ENCODE measurements at regions of chr17 and their contacts with region 1.

Region 1: GRCh38 chr17:28710861-28711722 is 596 bp downstream of the PROCA1 start:
- DNase-seq: peak; percentile 85 to 88 (median 87)
- H3K4me3 ChIP-seq: peak overlapping the region; percentile 63 to 69
- H3K4me3 Mint-ChIP-seq: peak overlapping the region; percentile 91 to 95 (median 94)
- H3K27ac ChIP-seq: peak overlapping the region; percentile 85
- H3K27ac Mint-ChIP-seq: peak overlapping the region; percentile 92 to 97 (median 96)
- H3K4me1 ChIP-seq: peaks cover 13% of the 10 kb centered on the region
- H3K4me1 Mint-ChIP-seq: peaks cover 13 to 30% (median 20%) of the 10 kb centered on the region in 4 donors
- H3K27me3 ChIP-seq: peaks cover 7% of the 10 kb centered on the region
- H3K27me3 Mint-ChIP-seq: peaks cover 4 to 11% of the 10 kb centered on the region in 2 donors

Region 2: GRCh38 chr17:28571255-28572122 is 139.6 kb before region 1 on chr17 and contains the start of gene PIGS:
- CTCF ChIA-PET with region 1: no interaction called
- POLR2A ChIA-PET with region 1: interaction called, 12 read pairs
- intact Hi-C with region 1: no loop called
- DNase-seq: peak; percentile 84 to 93 (median 87)
- H3K4me3 ChIP-seq: peak within 1 kb of the TSS; percentile 59 to 93
- H3K4me3 Mint-ChIP-seq: peak within 1 kb of the TSS; percentile 96 to 99 (median 97)
- H3K27ac ChIP-seq: peak within 1 kb of the TSS; percentile 79
- H3K27ac Mint-ChIP-seq: peak within 1 kb of the TSS; percentile 80 to 98 (median 97)
- H3K4me1 ChIP-seq: peaks cover 68% of the 10 kb centered on the region
- H3K4me1 Mint-ChIP-seq: peaks cover 41 to 82% (median 57%) of the 10 kb centered on the region in 4 donors
- H3K27me3 ChIP-seq: no peaks in the 10 kb centered on the region
- H3K27me3 Mint-ChIP-seq: no peaks in the 10 kb centered on the region
- total RNA-seq, gene PIGS: 57.9 to 58.2 TPM

Region 3: DNA sequence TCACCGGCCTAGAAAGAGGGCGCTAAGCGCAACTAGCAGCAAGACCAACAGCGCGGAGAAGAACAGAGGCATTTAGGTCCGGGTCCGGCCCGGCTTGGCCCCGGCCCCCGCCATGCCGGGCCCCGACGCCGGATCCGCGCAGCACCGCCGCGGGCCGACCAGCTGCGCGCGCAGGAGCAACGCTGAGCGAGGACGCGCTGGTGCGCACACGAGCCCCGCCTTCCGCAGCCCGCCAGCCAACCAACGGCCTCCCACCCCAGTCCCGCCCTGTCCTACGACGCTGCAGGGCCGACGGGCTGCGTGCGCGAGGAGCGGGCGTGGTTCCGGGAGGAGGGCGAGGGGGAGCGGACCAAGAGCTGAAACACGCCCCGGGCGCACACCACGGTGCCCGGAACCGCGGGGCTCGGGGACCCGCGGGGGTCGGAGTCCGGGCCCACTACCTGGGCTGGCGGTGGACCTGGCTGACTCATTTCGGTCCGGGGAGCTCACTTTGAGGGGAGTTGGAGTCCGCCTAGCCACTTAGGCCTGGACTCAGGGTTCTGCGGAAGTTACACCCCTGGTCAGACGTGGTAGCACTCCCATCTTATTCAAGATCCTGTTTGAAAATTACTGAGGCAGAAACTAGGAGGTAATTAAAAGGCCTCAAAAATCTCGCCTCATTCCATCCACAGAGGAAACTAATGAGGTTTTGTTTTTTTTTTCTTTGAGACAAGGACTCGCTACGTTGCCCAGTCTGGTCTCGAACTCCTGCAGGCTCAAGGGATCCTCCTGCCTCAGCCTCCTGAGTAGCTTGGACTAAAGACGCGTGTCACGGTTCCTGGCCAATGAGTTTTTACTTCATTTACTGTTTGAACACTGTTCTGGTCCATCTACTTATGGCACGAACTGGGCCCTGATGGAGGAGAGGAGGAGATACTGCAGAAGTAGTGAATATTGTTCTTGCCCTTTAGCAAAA is 65.8 kb before region 1 on chr17 and contains the start of gene BLTP2:
- CTCF ChIA-PET with region 1: interaction called, 8 read pairs
- POLR2A ChIA-PET with region 1: interaction called, 11 read pairs
- intact Hi-C with region 1: no loop called
- DNase-seq: peak; percentile 93 to 95 (median 94)
- H3K4me3 ChIP-seq: peak within 1 kb of the TSS; percentile 45 to 98
- H3K4me3 Mint-ChIP-seq: peak within 1 kb of the TSS; percentile 86 to 96 (median 92)
- H3K27ac ChIP-seq: peak within 1 kb of the TSS; percentile 91
- H3K27ac Mint-ChIP-seq: peak within 1 kb of the TSS; percentile 93 to 99 (median 98)
- H3K4me1 ChIP-seq: peaks cover 47% of the 10 kb centered on the region
- H3K4me1 Mint-ChIP-seq: peaks cover 31 to 45% (median 37%) of the 10 kb centered on the region in 4 donors
- H3K27me3 ChIP-seq: no peaks in the 10 kb centered on the region
- H3K27me3 Mint-ChIP-seq: no peaks in the 10 kb centered on the region
- total RNA-seq, gene BLTP2: 132 to 149 TPM

Region 4: DNA sequence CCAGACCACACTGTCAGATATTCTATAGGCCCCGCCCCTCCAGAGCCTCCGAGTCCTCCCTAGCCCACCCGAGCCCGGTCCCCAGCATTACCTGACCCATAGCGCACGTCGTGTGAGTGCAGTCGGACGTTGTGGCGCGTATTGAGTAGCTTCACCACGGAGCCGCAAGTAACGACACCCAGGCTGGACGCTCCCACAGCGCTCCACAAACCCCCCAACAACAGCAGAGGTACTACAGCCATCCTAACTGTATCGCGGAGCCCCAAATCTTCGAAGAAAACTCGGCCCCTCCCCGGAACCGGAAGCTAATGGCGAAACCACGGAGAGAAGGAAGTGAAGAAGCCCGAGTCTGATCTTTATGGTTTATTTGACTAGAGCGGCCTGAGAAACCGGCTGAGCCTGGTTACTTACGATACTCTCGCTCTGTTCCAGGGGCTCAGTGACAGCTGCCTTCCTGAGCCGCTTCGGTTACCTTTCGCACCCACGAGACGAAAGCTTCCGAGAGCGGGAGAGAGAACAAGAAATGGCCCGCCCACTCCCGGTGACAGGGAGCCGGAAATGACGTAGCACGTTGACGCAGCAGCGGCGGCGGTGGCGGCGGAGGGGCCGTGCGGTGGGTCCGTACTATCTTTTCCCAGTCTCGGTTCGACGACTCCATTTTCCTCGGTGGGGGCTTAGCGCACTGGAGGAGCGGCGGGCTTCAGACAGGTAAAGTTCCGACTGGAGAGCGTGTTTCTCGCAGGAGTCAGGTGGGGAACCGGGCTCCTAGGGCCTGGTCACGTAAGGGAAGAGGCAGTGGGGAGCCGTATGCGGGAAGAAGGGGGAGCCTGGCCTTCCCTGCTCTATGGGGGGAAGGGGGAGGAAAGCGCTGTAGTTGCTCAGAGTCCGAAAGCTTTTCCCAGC is 49.2 kb before region 1 on chr17 and contains the starts of genes SDF2 and SUPT6H:
- CTCF ChIA-PET with region 1: no interaction called
- POLR2A ChIA-PET with region 1: interaction called, 20 read pairs
- intact Hi-C with region 1: loop called (anchors 2 kb)
- DNase-seq: peak; percentile 94 to 96 (median 95)
- H3K4me3 ChIP-seq: peak within 1 kb of the TSS; percentile 92 to 99
- H3K4me3 Mint-ChIP-seq: peak within 1 kb of the TSS; percentile 99 to 100 (median 100)
- H3K27ac ChIP-seq: peak within 1 kb of the TSS; percentile 99
- H3K27ac Mint-ChIP-seq: peak within 1 kb of the TSS; percentile 97 to 100 (median 100)
- H3K4me1 ChIP-seq: peaks cover 51% of the 10 kb centered on the region
- H3K4me1 Mint-ChIP-seq: peaks cover 42 to 68% (median 56%) of the 10 kb centered on the region in 4 donors
- H3K27me3 ChIP-seq: no peaks in the 10 kb centered on the region
- H3K27me3 Mint-ChIP-seq: no peaks in the 10 kb centered on the region
- total RNA-seq, gene SDF2: 41.5 to 48.1 TPM
- total RNA-seq, gene SUPT6H: 96.5 to 102 TPM

Region 5: DNA sequence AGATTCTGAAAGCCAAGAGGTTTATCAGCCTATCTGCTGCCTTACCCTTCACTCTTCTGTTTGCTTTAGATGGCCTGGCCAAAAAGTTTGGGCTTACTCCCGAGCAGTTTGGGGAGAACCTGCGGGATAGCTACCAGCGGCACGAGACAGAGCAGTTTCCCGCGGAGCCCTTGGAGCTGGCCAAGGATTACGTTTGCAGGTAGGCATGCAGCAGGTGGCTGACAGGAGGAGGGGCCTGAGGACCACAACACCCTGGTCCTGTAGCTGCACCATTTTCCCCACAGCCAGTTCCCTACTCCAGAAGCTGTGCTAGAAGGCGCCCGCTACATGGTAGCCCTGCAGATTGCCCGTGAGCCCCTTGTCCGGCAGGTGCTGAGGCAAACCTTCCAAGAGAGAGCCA is 28.4 kb before region 1 on chr17:
- CTCF ChIA-PET with region 1: no interaction called
- POLR2A ChIA-PET with region 1: no interaction called
- intact Hi-C with region 1: no loop called
- DNase-seq: no peak
- H3K4me3 ChIP-seq: no peak overlapping the region
- H3K4me3 Mint-ChIP-seq: no peak overlapping the region
- H3K27ac ChIP-seq: no peak overlapping the region
- H3K27ac Mint-ChIP-seq: no peak overlapping the region
- H3K4me1 ChIP-seq: no peaks in the 10 kb centered on the region
- H3K4me1 Mint-ChIP-seq: peaks cover 0 to 6% (median 0%) of the 10 kb centered on the region in 4 donors
- H3K27me3 ChIP-seq: no peaks in the 10 kb centered on the region
- H3K27me3 Mint-ChIP-seq: no peaks in the 10 kb centered on the region

Region 6: GRCh38 chr17:28743225-28744103 is 32.4 kb after region 1 on chr17 and contains the start of gene TRAF4:
- CTCF ChIA-PET with region 1: no interaction called
- POLR2A ChIA-PET with region 1: interaction called, 10 read pairs
- intact Hi-C with region 1: no loop called
- DNase-seq: peak; percentile 70 to 78 (median 75)
- H3K4me3 ChIP-seq: peak within 1 kb of the TSS; percentile 64 to 81
- H3K4me3 Mint-ChIP-seq: peak within 1 kb of the TSS; percentile 87 to 92 (median 90)
- H3K27ac ChIP-seq: peak within 1 kb of the TSS; percentile 67
- H3K27ac Mint-ChIP-seq: peak within 1 kb of the TSS; percentile 90 to 98 (median 96)
- H3K4me1 ChIP-seq: peaks cover 35% of the 10 kb centered on the region
- H3K4me1 Mint-ChIP-seq: peaks cover 12 to 36% (median 22%) of the 10 kb centered on the region in 4 donors
- H3K27me3 ChIP-seq: no peaks in the 10 kb centered on the region
- H3K27me3 Mint-ChIP-seq: no peaks in the 10 kb centered on the region
- total RNA-seq, gene TRAF4: 31.2 to 32.9 TPM

Region 7: GRCh38 chr17:28750178-28751047 is 39.3 kb after region 1 on chr17:
- CTCF ChIA-PET with region 1: interaction called, 11 read pairs
- POLR2A ChIA-PET with region 1: interaction called, 10 read pairs
- intact Hi-C with region 1: no loop called
- DNase-seq: peak; percentile 82 to 89 (median 85)
- H3K4me3 ChIP-seq: no peak overlapping the region
- H3K4me3 Mint-ChIP-seq: peak overlapping the region in 1 of 8 donors; percentile 49
- H3K27ac ChIP-seq: peak overlapping the region; percentile 10
- H3K27ac Mint-ChIP-seq: peak overlapping the region in 6 of 7 donors; percentile 17 to 85 (median 70)
- H3K4me1 ChIP-seq: peaks cover 13% of the 10 kb centered on the region
- H3K4me1 Mint-ChIP-seq: peaks cover 7 to 18% (median 11%) of the 10 kb centered on the region in 4 donors
- H3K27me3 ChIP-seq: no peaks in the 10 kb centered on the region
- H3K27me3 Mint-ChIP-seq: no peaks in the 10 kb centered on the region

Region 8: DNA sequence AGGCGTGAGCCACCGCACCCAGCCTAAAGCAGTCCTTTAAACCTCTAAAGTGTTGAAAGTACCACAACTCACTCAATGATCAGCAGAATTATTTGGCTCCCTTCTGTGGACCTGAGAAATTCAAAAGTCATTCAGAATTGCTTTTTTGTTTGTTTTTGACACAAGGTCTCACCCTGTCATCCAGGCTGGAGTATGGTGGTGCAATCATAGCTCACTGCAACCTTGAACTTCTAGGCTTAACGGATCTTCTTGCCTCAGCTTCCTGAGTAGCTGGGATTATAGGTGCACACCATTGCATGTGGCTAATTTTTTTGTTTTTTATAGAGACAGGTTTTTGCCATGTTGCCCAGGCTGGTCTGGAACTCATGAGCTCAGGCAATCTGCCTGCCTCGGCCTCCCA is 77.0 kb after region 1 on chr17:
- CTCF ChIA-PET with region 1: no interaction called
- POLR2A ChIA-PET with region 1: no interaction called
- intact Hi-C with region 1: no loop called
- DNase-seq: no peak
- H3K4me3 ChIP-seq: no peak overlapping the region
- H3K4me3 Mint-ChIP-seq: no peak overlapping the region
- H3K27ac ChIP-seq: no peak overlapping the region
- H3K27ac Mint-ChIP-seq: peak overlapping the region in 2 of 7 donors; percentile 17 to 57
- H3K4me1 ChIP-seq: peaks cover 3% of the 10 kb centered on the region
- H3K4me1 Mint-ChIP-seq: peaks cover 9 to 15% (median 11%) of the 10 kb centered on the region in 4 donors
- H3K27me3 ChIP-seq: no peaks in the 10 kb centered on the region
- H3K27me3 Mint-ChIP-seq: no peaks in the 10 kb centered on the region